Naive thymus-derived CD4-positive, alpha-beta T cell (primary cell): ENCODE measurements at regions of chr14 and their contacts with region 1.

Region 1: DNA sequence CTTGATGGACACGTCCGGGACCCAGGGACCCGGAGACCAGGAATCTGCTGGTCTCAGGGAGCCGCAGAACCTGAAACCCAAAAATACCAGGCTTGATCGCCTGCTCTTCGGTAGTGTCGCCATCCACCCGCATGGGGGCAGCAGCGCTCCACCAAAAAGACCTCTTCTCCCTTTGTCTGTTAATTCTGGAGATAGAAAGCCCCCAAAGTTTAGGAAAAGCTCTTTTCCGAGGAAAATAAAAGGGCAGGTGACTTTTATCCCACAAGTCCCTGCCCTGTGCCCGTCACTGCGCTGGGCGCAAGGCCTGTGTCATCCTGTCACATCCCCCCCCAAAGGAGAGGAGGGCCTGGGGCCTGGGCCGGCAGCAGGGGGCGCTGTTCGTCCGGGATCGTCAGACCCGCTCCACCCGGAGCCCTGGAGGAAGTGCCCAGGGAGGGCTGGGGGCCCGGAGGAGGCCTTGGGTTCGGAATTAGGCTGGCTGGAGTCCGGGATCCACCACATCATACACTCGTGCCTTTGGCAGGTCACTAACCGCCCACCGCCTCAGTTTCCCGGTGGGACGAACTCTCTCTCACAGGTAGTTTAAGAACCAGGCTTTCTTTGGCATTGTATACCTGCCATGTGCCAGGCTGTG is 31.9 kb downstream of the DAD1 start:
- DNase-seq: peak; percentile 84 to 97 (median 93)
- ATAC-seq: peak; percentile 48
- H3K4me3 ChIP-seq: peak overlapping the region; percentile 65
- H3K4me3 Mint-ChIP-seq: peak overlapping the region; percentile 67 to 95 (median 88)
- H3K27ac ChIP-seq: peak overlapping the region; percentile 96
- H3K27ac Mint-ChIP-seq: peak overlapping the region; percentile 94 to 99 (median 99)
- H3K4me1 ChIP-seq: peaks cover 87 to 90% of the 10 kb centered on the region in 2 donors
- H3K4me1 Mint-ChIP-seq: peaks cover 62 to 95% (median 92%) of the 10 kb centered on the region in 7 donors
- H3K27me3 ChIP-seq: no peaks in the 10 kb centered on the region
- H3K27me3 Mint-ChIP-seq: peaks cover 0 to 4% (median 0%) of the 10 kb centered on the region in 5 donors

Region 2: GRCh38 chr14:21269252-21270046 is 1287.7 kb before region 1 on chr14 and contains the start of gene HNRNPC:
- CTCF ChIA-PET with region 1: no interaction called
- POLR2A ChIA-PET with region 1: no interaction called
- intact Hi-C with region 1: loop called in 1 of 2 experiments (anchors 5 kb)
- DNase-seq: peak; percentile 100
- ATAC-seq: peak; percentile 90
- H3K4me3 ChIP-seq: peak within 1 kb of the TSS; percentile 99
- H3K4me3 Mint-ChIP-seq: peak within 1 kb of the TSS; percentile 92 to 100 (median 99)
- H3K27ac ChIP-seq: peak within 1 kb of the TSS; percentile 97
- H3K27ac Mint-ChIP-seq: peak within 1 kb of the TSS; percentile 97 to 100 (median 100)
- H3K4me1 ChIP-seq: peaks cover 19 to 21% of the 10 kb centered on the region in 2 donors
- H3K4me1 Mint-ChIP-seq: peaks cover 21 to 43% (median 37%) of the 10 kb centered on the region in 7 donors
- H3K27me3 ChIP-seq: no peaks in the 10 kb centered on the region
- H3K27me3 Mint-ChIP-seq: no peaks in the 10 kb centered on the region
- total RNA-seq, gene HNRNPC: 469 to 687 (median 532) TPM

Region 3: GRCh38 chr14:21852061-21852664 is 704.9 kb before region 1 on chr14:
- CTCF ChIA-PET with region 1: no interaction called
- POLR2A ChIA-PET with region 1: interaction called, 21 read pairs
- intact Hi-C with region 1: no loop called
- DNase-seq: peak; percentile 36 to 78 (median 66)
- ATAC-seq: peak; percentile 90
- H3K4me3 ChIP-seq: peak overlapping the region; percentile 45
- H3K4me3 Mint-ChIP-seq: peak overlapping the region; percentile 61 to 88 (median 81)
- H3K27ac ChIP-seq: peak overlapping the region; percentile 32
- H3K27ac Mint-ChIP-seq: peak overlapping the region; percentile 29 to 90 (median 80)
- H3K4me1 ChIP-seq: no peaks in the 10 kb centered on the region
- H3K4me1 Mint-ChIP-seq: peaks cover 4 to 17% (median 14%) of the 10 kb centered on the region in 7 donors
- H3K27me3 ChIP-seq: no peaks in the 10 kb centered on the region
- H3K27me3 Mint-ChIP-seq: peaks cover 0 to 28% (median 6%) of the 10 kb centered on the region in 5 donors

Region 4: DNA sequence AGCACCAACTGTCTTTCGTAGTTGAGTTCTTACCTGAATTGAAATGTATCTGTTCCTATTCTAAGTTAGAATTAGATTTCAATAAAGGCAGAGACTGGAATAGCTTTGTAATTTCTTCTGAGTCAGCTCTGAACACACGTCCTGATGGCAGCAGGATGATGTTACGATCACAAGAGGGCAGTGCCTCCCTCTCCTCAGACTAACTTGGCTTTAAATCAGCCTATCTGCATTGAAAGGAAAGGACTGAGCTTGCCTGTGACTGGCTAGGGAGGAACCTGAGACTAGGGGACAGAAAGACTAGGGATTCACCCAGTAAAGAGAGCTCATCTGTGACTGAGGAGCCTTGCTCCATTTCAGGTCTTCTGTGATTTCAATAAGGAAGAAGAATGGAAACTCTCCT is 559.8 kb before region 1 on chr14:
- CTCF ChIA-PET with region 1: interaction called, 4 read pairs
- POLR2A ChIA-PET with region 1: interaction called, 10 read pairs
- intact Hi-C with region 1: loop called (anchors 1 to 2 kb)
- DNase-seq: peak in 6 of 9 donors; percentile 39 to 65 (median 58)
- ATAC-seq: peak; percentile 91
- H3K4me3 ChIP-seq: peak overlapping the region; percentile 51
- H3K4me3 Mint-ChIP-seq: peak overlapping the region; percentile 85 to 96 (median 90)
- H3K27ac ChIP-seq: peak overlapping the region; percentile 54
- H3K27ac Mint-ChIP-seq: peak overlapping the region; percentile 72 to 95 (median 89)
- H3K4me1 ChIP-seq: peaks cover under 1 to 2% of the 10 kb centered on the region in 2 donors
- H3K4me1 Mint-ChIP-seq: peaks cover 1 to 35% (median 19%) of the 10 kb centered on the region in 7 donors
- H3K27me3 ChIP-seq: no peaks in the 10 kb centered on the region
- H3K27me3 Mint-ChIP-seq: peaks cover 0 to 5% (median 0%) of the 10 kb centered on the region in 5 donors

Region 5: GRCh38 chr14:22172205-22172604 is 384.9 kb before region 1 on chr14:
- CTCF ChIA-PET with region 1: no interaction called
- POLR2A ChIA-PET with region 1: no interaction called
- intact Hi-C with region 1: no loop called
- DNase-seq: no peak
- ATAC-seq: no peak
- H3K4me3 ChIP-seq: no peak overlapping the region
- H3K4me3 Mint-ChIP-seq: peak overlapping the region in 9 of 10 donors; percentile 20 to 70 (median 49)
- H3K27ac ChIP-seq: no peak overlapping the region
- H3K27ac Mint-ChIP-seq: peak overlapping the region in 7 of 9 donors; percentile 13 to 67 (median 51)
- H3K4me1 ChIP-seq: peaks cover 0 to 2% of the 10 kb centered on the region in 2 donors
- H3K4me1 Mint-ChIP-seq: peaks cover 0 to 8% (median 3%) of the 10 kb centered on the region in 7 donors
- H3K27me3 ChIP-seq: no peaks in the 10 kb centered on the region
- H3K27me3 Mint-ChIP-seq: no peaks in the 10 kb centered on the region

Region 6: GRCh38 chr14:22185191-22185590 is 371.9 kb before region 1 on chr14:
- CTCF ChIA-PET with region 1: no interaction called
- POLR2A ChIA-PET with region 1: no interaction called
- intact Hi-C with region 1: no loop called
- DNase-seq: no peak
- ATAC-seq: no peak
- H3K4me3 ChIP-seq: no peak overlapping the region
- H3K4me3 Mint-ChIP-seq: no peak overlapping the region
- H3K27ac ChIP-seq: no peak overlapping the region
- H3K27ac Mint-ChIP-seq: no peak overlapping the region
- H3K4me1 ChIP-seq: no peaks in the 10 kb centered on the region
- H3K4me1 Mint-ChIP-seq: no peaks in the 10 kb centered on the region
- H3K27me3 ChIP-seq: no peaks in the 10 kb centered on the region
- H3K27me3 Mint-ChIP-seq: no peaks in the 10 kb centered on the region

Region 7: DNA sequence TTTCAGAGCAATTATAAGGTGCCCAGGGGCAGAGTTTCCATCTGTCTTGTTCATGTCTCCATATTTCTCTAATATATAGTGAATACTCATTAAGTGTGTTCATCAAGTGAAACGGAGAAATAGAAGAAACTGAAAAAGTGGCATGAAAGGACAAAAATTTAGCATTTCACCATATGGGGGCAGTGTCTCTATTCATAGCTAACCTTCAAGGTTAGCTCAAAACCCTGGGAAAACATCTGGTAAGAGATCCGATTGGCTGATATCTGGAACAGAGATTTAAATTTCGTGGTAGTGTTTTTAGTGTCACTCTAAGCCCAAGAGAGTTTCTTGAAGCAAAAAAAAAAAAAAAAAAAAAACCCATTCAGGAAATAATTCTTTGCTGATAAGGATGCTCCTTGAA is 335.6 kb before region 1 on chr14:
- CTCF ChIA-PET with region 1: interaction called, 4 read pairs
- POLR2A ChIA-PET with region 1: interaction called, 3 read pairs
- intact Hi-C with region 1: loop called (anchors 1 kb)
- DNase-seq: peak in 5 of 9 donors; percentile 5 to 29 (median 20)
- ATAC-seq: no peak
- H3K4me3 ChIP-seq: no peak overlapping the region
- H3K4me3 Mint-ChIP-seq: peak overlapping the region; percentile 25 to 73 (median 52)
- H3K27ac ChIP-seq: no peak overlapping the region
- H3K27ac Mint-ChIP-seq: peak overlapping the region in 6 of 9 donors; percentile 4 to 72 (median 52)
- H3K4me1 ChIP-seq: no peaks in the 10 kb centered on the region
- H3K4me1 Mint-ChIP-seq: peaks cover 0 to 13% (median 7%) of the 10 kb centered on the region in 7 donors
- H3K27me3 ChIP-seq: no peaks in the 10 kb centered on the region
- H3K27me3 Mint-ChIP-seq: no peaks in the 10 kb centered on the region

Region 8: GRCh38 chr14:22542360-22542759 is 14.7 kb before region 1 on chr14:
- CTCF ChIA-PET with region 1: interaction called, 26 read pairs
- POLR2A ChIA-PET with region 1: interaction called, 458 read pairs
- intact Hi-C with region 1: loop called in 1 of 2 experiments (anchors 1 kb)
- DNase-seq: no peak
- ATAC-seq: no peak
- H3K4me3 ChIP-seq: peak overlapping the region; percentile 46
- H3K4me3 Mint-ChIP-seq: peak overlapping the region; percentile 79 to 93 (median 87)
- H3K27ac ChIP-seq: peak overlapping the region; percentile 90
- H3K27ac Mint-ChIP-seq: peak overlapping the region; percentile 92 to 99 (median 94)
- H3K4me1 ChIP-seq: peaks cover 99% of the 10 kb centered on the region in 2 donors
- H3K4me1 Mint-ChIP-seq: peaks cover 53 to 100% (median 98%) of the 10 kb centered on the region in 7 donors
- H3K27me3 ChIP-seq: no peaks in the 10 kb centered on the region
- H3K27me3 Mint-ChIP-seq: no peaks in the 10 kb centered on the region

Region 9: DNA sequence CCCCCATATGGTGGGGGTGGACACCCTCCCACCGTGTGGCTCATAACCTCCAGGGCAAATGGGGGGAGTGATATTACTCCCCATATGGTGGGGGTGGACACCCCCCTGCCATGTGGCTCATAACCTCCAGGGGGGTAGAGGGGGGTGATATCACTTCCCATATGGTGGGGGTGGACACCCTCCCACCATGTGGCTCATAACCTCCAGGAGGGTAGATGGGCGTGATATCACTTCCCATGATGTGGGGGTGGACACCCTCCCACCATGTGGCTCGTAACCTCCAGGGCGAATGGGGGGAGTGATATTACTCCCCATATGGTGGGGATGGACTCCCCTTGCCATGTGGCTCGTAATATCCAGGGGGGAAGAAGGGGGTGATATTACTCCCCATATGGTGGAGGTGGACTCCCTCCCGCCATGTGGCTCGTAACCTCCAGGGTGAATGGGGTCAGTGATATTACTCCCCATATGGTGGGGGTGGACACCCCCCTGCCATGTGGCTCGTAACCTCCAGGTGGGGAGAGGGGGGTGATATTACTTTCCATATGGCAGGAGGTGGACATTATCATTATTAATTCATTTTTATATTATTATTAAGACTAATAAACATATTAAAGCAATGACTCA is 158.2 kb after region 1 on chr14:
- CTCF ChIA-PET with region 1: no interaction called
- POLR2A ChIA-PET with region 1: no interaction called
- intact Hi-C with region 1: no loop called
- DNase-seq: no peak
- ATAC-seq: no peak
- H3K4me3 ChIP-seq: no peak overlapping the region
- H3K4me3 Mint-ChIP-seq: peak overlapping the region in 1 of 10 donors; percentile 29
- H3K27ac ChIP-seq: no peak overlapping the region
- H3K27ac Mint-ChIP-seq: peak overlapping the region in 1 of 9 donors; percentile 20
- H3K4me1 ChIP-seq: peaks cover 4 to 6% of the 10 kb centered on the region in 2 donors
- H3K4me1 Mint-ChIP-seq: peaks cover 3 to 17% (median 11%) of the 10 kb centered on the region in 7 donors
- H3K27me3 ChIP-seq: no peaks in the 10 kb centered on the region
- H3K27me3 Mint-ChIP-seq: peaks cover 18 to 36% (median 24%) of the 10 kb centered on the region in 5 donors

Region 10: DNA sequence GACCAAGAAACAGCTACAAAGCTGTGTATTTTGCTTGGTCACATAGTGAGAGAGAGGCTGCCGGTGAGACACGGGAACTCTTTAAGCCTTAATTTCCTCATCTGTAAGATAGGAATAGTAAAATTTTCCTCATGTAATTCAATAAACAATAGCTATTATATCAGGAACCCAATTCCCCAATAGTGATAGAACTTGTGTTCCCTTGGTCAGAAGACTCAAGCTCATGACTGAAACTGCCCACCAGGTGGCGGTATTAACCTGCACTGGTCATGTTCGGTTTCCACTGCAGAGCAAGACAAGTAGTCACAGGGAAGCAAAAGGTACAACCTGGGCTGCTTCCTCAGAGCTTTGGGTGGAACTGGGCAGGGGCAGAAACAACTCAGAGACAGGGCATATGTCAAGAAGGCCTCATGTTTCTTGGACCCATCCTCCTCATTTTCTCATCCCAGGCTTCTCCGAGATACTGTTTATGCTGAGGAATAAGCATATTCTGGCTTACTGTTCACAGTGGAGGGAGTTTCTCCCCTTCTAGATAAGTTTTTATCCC is 429.5 kb after region 1 on chr14:
- CTCF ChIA-PET with region 1: interaction called, 5 read pairs
- POLR2A ChIA-PET with region 1: interaction called, 3 read pairs
- intact Hi-C with region 1: loop called (anchors 1 kb)
- DNase-seq: peak; percentile 65 to 87 (median 82)
- ATAC-seq: peak; percentile 79
- H3K4me3 ChIP-seq: no peak overlapping the region
- H3K4me3 Mint-ChIP-seq: no peak overlapping the region
- H3K27ac ChIP-seq: no peak overlapping the region
- H3K27ac Mint-ChIP-seq: peak overlapping the region in 4 of 9 donors; percentile 2 to 39 (median 24)
- H3K4me1 ChIP-seq: peaks cover 0 to 8% of the 10 kb centered on the region in 2 donors
- H3K4me1 Mint-ChIP-seq: peaks cover 0 to 5% (median 0%) of the 10 kb centered on the region in 7 donors
- H3K27me3 ChIP-seq: no peaks in the 10 kb centered on the region
- H3K27me3 Mint-ChIP-seq: no peaks in the 10 kb centered on the region